CD8-positive, alpha-beta T cell (primary cell): ENCODE measurements at regions of chr1 and their contacts with region 1.

Region 1: DNA sequence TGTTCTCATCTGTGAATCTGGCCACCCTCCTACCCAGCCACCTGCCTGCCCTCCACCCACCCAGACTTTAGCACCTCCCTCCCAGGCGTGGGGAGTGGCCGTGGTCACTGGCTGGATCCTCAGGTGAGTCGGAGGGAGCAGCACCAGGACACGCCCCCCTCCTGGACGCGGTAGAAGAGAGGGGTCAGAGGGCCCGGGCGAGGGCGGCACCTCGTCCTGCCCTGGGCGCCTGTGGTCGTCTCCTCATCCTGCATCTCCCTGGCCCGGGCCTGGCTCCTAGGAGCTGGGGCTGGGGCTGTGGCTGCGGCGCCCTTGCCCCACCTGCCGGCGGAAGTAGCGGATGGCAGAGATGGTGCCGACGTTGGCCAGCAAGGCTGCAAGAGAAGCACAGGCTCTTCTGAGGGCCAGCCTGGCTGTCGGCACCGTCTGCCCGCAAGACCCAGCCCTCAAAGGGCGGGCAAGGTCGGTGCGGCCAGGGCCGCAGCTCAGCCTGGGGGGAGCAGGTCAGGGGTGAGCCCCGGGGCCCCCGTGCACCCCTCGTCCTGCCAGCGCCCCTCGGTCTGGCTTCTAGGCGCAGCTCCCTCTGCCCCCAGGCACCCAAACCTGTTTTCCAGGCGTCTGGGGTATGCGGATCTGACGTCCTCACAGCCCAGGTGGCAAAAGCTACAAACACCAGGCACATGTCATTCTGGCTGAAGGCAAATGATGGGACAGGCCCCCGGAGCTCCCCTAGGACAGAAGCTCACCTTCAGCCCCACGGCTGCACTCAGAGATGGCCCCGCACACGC is 5.8 kb downstream of the PERM1 start:
- DNase-seq: peak in 8 of 9 experiments; percentile 56 to 82 (median 72)
- ATAC-seq: peak; percentile 88
- H3K4me3 ChIP-seq: no peak overlapping the region
- H3K4me3 Mint-ChIP-seq: peak overlapping the region; percentile 37
- H3K27ac ChIP-seq: no peak overlapping the region
- H3K27ac Mint-ChIP-seq: no peak overlapping the region
- H3K4me1 ChIP-seq: peaks cover 9% of the 10 kb centered on the region
- H3K4me1 Mint-ChIP-seq: peaks cover 9% of the 10 kb centered on the region
- H3K27me3 ChIP-seq: peaks cover 8 to 27% of the 10 kb centered on the region in 2 experiments
- H3K27me3 Mint-ChIP-seq: peaks cover 19% of the 10 kb centered on the region
- CTCF ChIP-seq: peak; percentile 59

Region 2: DNA sequence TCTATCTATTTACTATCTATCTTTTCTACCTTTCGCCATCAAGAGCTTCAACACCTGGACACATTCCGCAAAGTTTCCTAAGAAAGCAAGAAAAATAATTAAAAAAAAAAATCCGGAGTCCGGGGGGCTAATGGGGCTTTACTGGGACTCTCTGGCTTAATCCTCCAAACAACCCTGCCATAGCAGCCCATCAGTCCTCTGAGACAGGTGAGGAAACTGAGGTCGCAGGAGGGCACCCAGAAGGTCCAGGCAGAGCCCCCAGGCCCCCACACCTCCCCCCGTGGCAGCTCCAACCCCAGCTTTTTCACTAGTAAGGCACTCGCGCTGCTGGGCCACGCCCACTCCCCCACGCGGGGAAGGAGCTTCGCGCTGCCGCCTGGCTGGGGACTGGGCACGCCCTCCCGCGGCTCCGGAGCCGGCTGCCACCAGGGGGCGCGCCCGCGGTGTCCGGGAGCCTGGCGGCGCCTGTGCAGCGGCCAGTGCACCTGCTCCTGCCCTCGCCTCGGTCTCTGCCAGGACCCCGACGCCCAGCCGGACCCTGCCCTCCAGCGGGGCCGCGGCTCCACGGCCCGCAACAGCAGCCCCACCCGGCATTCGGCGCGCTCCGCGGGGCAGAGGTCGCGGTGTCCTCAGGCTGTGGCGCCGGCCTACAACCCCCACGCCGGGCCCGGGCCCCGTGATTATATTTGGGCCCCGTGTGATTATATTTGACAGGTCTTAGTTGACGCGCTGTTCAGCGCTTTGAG is 106.4 kb before region 1 on chr1:
- CTCF ChIA-PET with region 1: interaction called, 4 read pairs
- POLR2A ChIA-PET with region 1: no interaction called
- intact Hi-C with region 1: loop called (anchors 1 kb)
- DNase-seq: peak; percentile 73 to 91 (median 87)
- ATAC-seq: peak; percentile 99
- H3K4me3 ChIP-seq: no peak overlapping the region
- H3K4me3 Mint-ChIP-seq: peak overlapping the region; percentile 54
- H3K27ac ChIP-seq: no peak overlapping the region
- H3K27ac Mint-ChIP-seq: no peak overlapping the region
- H3K4me1 ChIP-seq: no peaks in the 10 kb centered on the region
- H3K4me1 Mint-ChIP-seq: peaks cover 7% of the 10 kb centered on the region
- H3K27me3 ChIP-seq: no peaks in the 10 kb centered on the region
- H3K27me3 Mint-ChIP-seq: peaks cover 25% of the 10 kb centered on the region
- CTCF ChIP-seq: peak; percentile 89